ENCODE measurements at regions of chr13 and their contacts with region 1.

Region 1: GRCh38 chr13:81480634-81481033 is 1139.7 kb upstream of the SPRY2 start:
- DNase-seq: no peak
- ATAC-seq: no peak

Region 2: DNA sequence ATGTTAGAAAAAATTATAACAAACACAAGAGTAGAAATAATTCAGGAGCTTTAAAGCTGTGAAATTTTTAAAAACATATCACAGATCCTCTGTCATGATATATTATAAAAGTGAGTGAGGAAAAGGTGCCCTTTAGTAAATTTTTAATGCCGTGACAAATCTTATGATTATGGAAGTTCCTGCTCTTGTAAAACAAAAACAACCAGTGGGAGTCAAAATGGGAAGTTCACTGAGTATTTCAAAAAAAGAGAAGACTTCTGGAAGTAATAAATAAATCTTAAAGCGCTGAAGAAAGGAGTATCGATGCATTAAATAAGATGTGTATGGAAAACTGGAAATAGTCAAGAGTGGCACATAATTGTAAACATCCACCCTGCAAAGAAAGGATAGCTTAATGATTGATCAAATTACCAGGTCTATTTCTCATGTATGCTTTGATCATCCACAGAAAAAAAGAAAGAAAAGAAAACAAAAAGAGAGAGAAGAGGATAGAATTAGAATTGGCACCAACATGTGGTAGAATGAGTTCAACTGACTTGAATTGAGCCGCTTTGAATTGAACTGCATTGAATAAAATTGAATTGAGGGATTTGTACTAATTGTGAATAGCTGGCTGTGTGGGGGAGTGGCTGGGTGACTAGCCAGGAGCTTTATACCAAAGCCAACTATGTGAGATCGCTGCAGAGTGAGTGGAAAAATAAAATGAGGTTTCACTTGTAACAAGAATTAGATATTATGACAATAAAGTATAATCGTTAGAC is 492.1 kb before region 1 on chr13:
- intact Hi-C with region 1: no loop called
- DNase-seq: no peak
- ATAC-seq: no peak

Region 3: DNA sequence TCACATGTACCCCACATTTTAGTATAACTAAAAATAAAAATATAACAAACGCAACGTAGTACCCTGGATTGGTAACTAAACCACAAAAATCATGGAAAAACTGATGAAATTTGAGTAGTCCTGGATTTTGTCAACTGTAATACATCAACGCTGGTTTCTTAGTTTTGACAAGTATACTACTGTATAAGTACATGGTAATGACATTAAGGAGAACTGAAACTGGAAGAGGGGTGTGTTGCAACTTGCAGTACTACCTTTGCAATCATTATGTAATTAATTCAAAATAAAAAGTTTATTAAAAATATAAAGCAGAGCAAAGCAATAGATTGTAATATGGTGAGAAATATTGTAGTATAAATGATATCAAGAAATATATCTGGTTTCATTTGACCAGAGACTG is 18.3 kb after region 1 on chr13:
- intact Hi-C with region 1: no loop called
- DNase-seq: no peak
- ATAC-seq: no peak

Region 4: DNA sequence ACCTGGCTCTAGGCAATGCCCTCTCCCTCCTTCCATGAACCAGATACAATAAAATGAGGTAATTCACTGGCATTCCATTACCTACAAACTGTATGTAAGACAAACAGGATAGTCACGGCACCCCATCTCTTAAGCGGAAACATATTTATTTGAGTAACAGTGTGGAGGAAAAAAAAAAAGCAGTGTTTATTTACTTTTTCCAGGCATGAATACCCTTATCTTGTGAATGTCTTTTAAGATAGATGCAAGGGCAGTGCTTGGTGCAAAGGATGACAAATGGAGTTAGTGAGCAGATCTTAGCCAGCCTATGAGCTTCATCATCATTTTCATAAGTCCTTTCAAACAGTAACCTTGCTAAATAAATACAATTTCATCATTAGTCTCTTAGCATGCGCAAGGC is 522.1 kb after region 1 on chr13:
- intact Hi-C with region 1: no loop called
- DNase-seq: no peak
- ATAC-seq: no peak

Region 5: DNA sequence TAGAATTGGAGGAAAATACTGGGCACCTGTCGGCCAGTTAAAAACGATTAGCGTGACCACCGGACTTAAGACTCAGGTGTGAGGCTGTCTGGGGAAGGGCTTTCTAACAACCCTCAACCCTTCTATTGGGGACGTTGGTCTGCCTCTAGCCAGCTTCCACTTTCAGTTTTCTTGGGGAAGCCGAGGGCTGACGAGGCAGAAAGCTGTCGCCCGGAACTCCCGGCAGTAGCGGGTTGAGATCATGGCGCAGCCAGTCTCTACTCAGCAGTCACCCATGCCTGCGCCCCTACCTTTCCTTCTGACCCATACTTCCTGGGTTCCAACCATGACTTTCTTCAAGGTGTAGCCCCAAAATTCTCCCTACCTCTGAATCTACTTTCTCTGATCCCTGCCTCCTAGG is 977.5 kb after region 1 on chr13:
- intact Hi-C with region 1: loop called (anchors 5 kb)
- DNase-seq: no peak
- ATAC-seq: no peak

Region 6: GRCh38 chr13:83085186-83085900 is 1604.7 kb after region 1 on chr13:
- intact Hi-C with region 1: no loop called
- DNase-seq: no peak
- ATAC-seq: no peak

Measured in sciatic nerve (tissue), 2 donors.